Head of caudate nucleus (tissue), 42 donors: ENCODE measurements at regions of chr12 and their contacts with region 1.

Region 1: GRCh38 chr12:78118036-78118435 is 287.3 kb downstream of the NAV3 start:
- DNase-seq: peak in 7 of 42 donors; percentile 7 to 41 (median 19)

Region 2: DNA sequence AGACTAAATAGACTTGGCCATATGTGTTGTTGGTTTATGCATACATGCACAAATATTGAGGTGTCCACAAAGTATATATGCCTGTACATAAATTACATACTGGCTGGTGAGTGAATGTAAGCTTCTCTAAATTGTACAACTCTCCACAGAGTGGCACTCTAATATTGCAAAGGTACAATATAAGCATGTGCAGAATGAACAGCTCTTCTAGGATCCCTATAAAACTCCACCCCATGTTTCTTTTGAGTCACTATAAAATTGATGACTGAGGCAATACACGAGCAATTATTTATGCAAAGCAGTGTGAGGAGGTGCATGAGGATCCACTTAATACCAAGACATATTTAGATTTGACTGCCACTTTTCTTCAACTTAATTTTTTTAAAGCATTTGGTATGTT is 115.2 kb before region 1 on chr12:
- intact Hi-C with region 1: loop called (anchors 5 kb)
- DNase-seq: no peak

Region 3: GRCh38 chr12:78315028-78315427 is 197.0 kb after region 1 on chr12:
- intact Hi-C with region 1: no loop called
- DNase-seq: no peak